ENCODE measurements at regions of chr2 and their contacts with region 1.

Region 1: GRCh38 chr2:226215902-226216503 is 583.6 kb downstream of the IRS1 start:
- DNase-seq: peak; percentile 80
- ATAC-seq: peak; percentile 95
- H3K4me3 Mint-ChIP-seq: no peak overlapping the region
- H3K27ac Mint-ChIP-seq: no peak overlapping the region
- H3K4me1 Mint-ChIP-seq: no peaks in the 10 kb centered on the region
- H3K27me3 Mint-ChIP-seq: peaks cover 3% of the 10 kb centered on the region

Region 2: DNA sequence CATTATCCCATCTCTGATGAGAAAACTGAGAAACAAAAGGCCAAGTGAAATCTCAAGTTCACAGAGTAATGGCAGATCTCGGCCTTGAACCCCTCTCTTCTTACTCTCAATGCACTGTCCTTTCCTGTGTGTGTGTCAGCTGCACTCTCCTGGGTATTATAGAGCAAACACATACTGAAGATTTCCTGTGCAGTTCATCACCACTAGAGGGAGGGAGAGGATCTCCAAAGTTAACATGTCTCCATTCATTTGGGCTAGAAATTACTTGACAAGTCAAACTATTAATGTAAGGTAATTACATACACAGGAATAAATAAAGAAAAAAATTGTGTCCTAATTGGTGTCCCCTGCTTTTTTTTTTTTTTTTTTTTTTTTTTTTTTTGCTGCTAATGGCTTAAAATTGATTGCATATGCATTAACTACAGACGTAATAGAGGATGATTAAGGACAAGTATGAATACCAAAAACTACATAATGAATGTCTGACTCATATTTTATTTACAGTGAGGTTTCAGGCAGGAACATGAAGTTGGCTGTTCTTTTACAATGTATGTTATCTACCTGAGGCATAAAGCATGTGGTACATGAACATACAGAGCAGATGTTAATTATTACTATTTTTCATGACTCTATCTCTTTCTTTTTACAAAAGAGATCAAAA is 547.3 kb before region 1 on chr2:
- CTCF ChIA-PET with region 1: no interaction called
- POLR2A ChIA-PET with region 1: no interaction called
- intact Hi-C with region 1: loop called in 1 of 2 experiments (anchors 10 kb)
- DNase-seq: peak; percentile 14
- ATAC-seq: peak; percentile 79
- H3K4me3 Mint-ChIP-seq: no peak overlapping the region
- H3K27ac Mint-ChIP-seq: no peak overlapping the region
- H3K4me1 Mint-ChIP-seq: no peaks in the 10 kb centered on the region
- H3K27me3 Mint-ChIP-seq: peaks cover 10% of the 10 kb centered on the region

Region 3: GRCh38 chr2:226227359-226227758 is 11.4 kb after region 1 on chr2:
- CTCF ChIA-PET with region 1: interaction called, 10 read pairs
- POLR2A ChIA-PET with region 1: no interaction called
- intact Hi-C with region 1: no loop called
- DNase-seq: no peak
- ATAC-seq: no peak
- H3K4me3 Mint-ChIP-seq: no peak overlapping the region
- H3K27ac Mint-ChIP-seq: no peak overlapping the region
- H3K4me1 Mint-ChIP-seq: no peaks in the 10 kb centered on the region
- H3K27me3 Mint-ChIP-seq: peaks cover 6% of the 10 kb centered on the region